Sigmoid colon (tissue), 7 donors: ENCODE measurements at regions of chr7 and their contacts with region 1.

Region 1: GRCh38 chr7:31134246-31135188 is 82.4 kb downstream of the ADCYAP1R1 start:
- DNase-seq: peak; percentile 79
- H3K4me3 ChIP-seq: no peak overlapping the region
- H3K27ac ChIP-seq: no peak overlapping the region
- H3K4me1 ChIP-seq: no peaks in the 10 kb centered on the region
- H3K27me3 ChIP-seq: no peaks in the 10 kb centered on the region
- CTCF ChIP-seq: peak; percentile 21 to 68 (median 53)
- EP300 ChIP-seq: no peak
- POLR2A ChIP-seq: no peak

Region 2: DNA sequence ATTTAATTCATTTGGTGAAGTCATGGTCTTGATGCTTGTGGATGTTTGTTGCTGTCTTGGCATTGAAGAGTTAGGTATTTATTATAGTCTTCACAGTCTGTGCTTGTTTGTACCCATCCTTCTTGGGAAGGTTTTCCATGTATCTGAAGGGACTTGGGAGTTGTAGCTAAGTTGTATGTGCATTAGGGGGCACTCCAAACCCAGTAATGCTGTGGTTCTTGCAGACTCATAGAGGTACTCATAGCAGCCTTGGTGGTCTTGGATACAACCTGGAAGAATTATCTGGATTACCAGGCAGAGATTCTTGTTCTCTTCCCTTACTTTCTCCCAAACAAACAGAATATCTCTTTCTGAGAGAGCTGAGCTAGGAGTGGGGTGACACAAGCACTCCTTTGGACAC is 10.8 kb after region 1 on chr7:
- intact Hi-C with region 1: no loop called
- DNase-seq: no peak
- H3K4me3 ChIP-seq: no peak overlapping the region
- H3K27ac ChIP-seq: no peak overlapping the region
- H3K4me1 ChIP-seq: no peaks in the 10 kb centered on the region
- H3K27me3 ChIP-seq: no peaks in the 10 kb centered on the region
- CTCF ChIP-seq: no peak
- EP300 ChIP-seq: no peak
- POLR2A ChIP-seq: no peak

Region 3: GRCh38 chr7:31488562-31489203 is 354.2 kb after region 1 on chr7:
- intact Hi-C with region 1: loop called (anchors 10 kb)
- DNase-seq: no peak
- H3K4me3 ChIP-seq: no peak overlapping the region
- H3K27ac ChIP-seq: no peak overlapping the region
- H3K4me1 ChIP-seq: no peaks in the 10 kb centered on the region
- H3K27me3 ChIP-seq: peaks cover 0 to 5% (median 0%) of the 10 kb centered on the region in 3 donors
- CTCF ChIP-seq: peak in 2 of 4 experiments; percentile 34 to 35
- EP300 ChIP-seq: no peak
- POLR2A ChIP-seq: no peak

Region 4: GRCh38 chr7:31633894-31634494 is 499.5 kb after region 1 on chr7:
- intact Hi-C with region 1: loop called (anchors 5 kb)
- DNase-seq: no peak
- H3K4me3 ChIP-seq: no peak overlapping the region
- H3K27ac ChIP-seq: no peak overlapping the region
- H3K4me1 ChIP-seq: no peaks in the 10 kb centered on the region
- H3K27me3 ChIP-seq: no peaks in the 10 kb centered on the region
- CTCF ChIP-seq: peak; percentile 11 to 36 (median 36)
- EP300 ChIP-seq: no peak
- POLR2A ChIP-seq: no peak